Activated naive CD4-positive, alpha-beta T cell treated with anti-CD3 and anti-CD28 coated beads for 36 hours (primary cell): ENCODE measurements at regions of chr17 and their contacts with region 1.

Region 1: DNA sequence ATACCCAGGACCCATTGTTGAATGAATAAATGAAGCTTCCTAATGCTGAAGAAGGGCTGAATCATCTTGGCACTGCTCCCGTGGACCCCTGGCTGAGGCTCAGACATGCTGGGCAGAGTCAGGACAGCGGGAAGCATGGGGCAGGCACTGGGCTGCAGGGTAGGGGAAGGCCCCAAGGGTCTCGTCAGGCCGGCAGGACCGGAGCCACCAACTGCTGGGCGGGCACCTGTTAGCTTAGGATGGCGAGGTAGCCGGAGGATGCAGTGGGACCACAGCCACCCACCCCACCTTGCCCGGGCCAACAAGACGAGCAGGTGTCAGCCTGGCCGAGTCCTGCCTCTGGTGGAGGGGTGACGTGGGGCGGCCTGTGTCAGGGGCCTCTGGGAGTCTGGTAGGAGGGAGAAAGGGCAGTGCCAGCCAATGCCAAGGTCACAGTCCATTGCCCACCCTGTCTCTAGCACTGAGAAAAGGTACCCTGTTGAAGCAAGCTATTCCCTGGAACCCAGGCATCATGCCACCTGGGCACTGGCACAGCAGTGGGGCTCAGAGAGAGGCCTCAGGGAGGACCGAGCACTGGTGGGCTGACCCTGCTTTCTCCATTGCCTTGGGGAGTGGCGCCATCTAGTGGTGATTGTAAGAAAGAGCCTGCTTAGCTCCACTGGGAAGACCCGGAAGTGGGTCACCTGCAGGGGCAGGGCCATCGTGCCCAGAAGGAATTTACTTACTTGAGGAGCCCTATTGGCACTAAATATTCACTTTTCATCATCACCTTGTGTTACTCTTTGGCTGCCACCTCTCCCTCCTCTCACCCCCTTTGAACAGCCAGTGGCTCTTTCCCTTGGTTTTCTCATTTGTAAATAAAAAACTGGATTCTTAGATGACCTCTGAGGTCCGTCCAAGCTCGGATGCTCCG is 3.0 kb upstream of the DLX3 start:
- DNase-seq: peak; percentile 92
- H3K4me3 Mint-ChIP-seq: no peak overlapping the region
- H3K27ac Mint-ChIP-seq: no peak overlapping the region
- H3K4me1 Mint-ChIP-seq: peaks cover 25% of the 10 kb centered on the region
- H3K27me3 Mint-ChIP-seq: peaks cover 61% of the 10 kb centered on the region

Region 2: GRCh38 chr17:49694847-49695683 is 303.0 kb before region 1 on chr17:
- CTCF ChIA-PET with region 1: interaction called, 3 read pairs
- intact Hi-C with region 1: loop called (anchors 1 kb)
- DNase-seq: peak; percentile 87
- H3K4me3 Mint-ChIP-seq: no peak overlapping the region
- H3K27ac Mint-ChIP-seq: peak overlapping the region; percentile 92
- H3K4me1 Mint-ChIP-seq: peaks cover 39% of the 10 kb centered on the region
- H3K27me3 Mint-ChIP-seq: no peaks in the 10 kb centered on the region

Region 3: GRCh38 chr17:49822829-49823228 is 175.2 kb before region 1 on chr17:
- CTCF ChIA-PET with region 1: no interaction called
- intact Hi-C with region 1: no loop called
- DNase-seq: no peak
- H3K4me3 Mint-ChIP-seq: no peak overlapping the region
- H3K27ac Mint-ChIP-seq: no peak overlapping the region
- H3K4me1 Mint-ChIP-seq: peaks cover 31% of the 10 kb centered on the region
- H3K27me3 Mint-ChIP-seq: no peaks in the 10 kb centered on the region

Region 4: GRCh38 chr17:49880291-49881053 is 117.6 kb before region 1 on chr17:
- CTCF ChIA-PET with region 1: interaction called, 77 read pairs
- intact Hi-C with region 1: loop called (anchors 1 kb)
- DNase-seq: peak; percentile 81
- H3K4me3 Mint-ChIP-seq: no peak overlapping the region
- H3K27ac Mint-ChIP-seq: no peak overlapping the region
- H3K4me1 Mint-ChIP-seq: peaks cover 7% of the 10 kb centered on the region
- H3K27me3 Mint-ChIP-seq: peaks cover 32% of the 10 kb centered on the region

Region 5: GRCh38 chr17:49939318-49939717 is 58.7 kb before region 1 on chr17:
- CTCF ChIA-PET with region 1: interaction called, 26 read pairs
- intact Hi-C with region 1: no loop called
- DNase-seq: no peak
- H3K4me3 Mint-ChIP-seq: no peak overlapping the region
- H3K27ac Mint-ChIP-seq: no peak overlapping the region
- H3K4me1 Mint-ChIP-seq: no peaks in the 10 kb centered on the region
- H3K27me3 Mint-ChIP-seq: peaks cover 4% of the 10 kb centered on the region

Region 6: DNA sequence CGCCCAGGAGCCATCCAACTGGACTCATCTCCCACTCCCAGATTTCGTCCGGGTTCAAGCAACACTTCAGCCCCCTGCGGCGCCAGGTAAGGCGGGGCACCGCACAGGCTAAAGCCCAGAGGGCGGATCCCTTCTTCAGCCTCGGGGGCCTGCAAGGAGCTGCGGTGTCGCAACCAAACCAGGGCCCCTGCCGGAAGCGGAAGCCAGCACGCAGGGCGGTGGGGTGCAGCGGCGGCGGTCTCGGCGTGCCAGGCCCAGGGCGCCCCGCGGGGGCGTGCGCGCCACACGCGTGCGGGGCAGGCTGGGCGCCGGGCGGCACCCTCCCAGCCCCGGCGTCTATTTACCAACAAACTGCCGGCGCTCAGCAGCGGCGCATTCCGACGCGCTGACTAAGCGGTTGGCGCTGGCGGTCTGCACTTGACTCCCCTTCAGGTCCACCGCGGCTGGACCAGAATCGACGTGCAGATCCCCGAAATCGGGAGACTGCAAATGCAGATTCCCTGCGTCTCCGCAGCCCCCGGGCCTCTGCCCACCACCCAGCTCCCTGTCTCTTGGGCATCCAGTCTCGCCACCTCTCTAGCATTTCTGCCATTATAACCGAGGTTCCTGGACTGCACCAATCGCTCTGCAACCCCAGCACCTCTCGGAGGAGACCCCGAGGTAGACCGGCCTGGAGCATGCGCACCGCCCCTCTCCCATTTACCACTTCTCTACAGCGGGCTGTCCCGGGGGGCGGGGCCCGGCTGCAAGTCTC is 29.5 kb before region 1 on chr17:
- CTCF ChIA-PET with region 1: interaction called, 51 read pairs
- intact Hi-C with region 1: loop called (anchors 2 kb)
- DNase-seq: peak; percentile 82
- H3K4me3 Mint-ChIP-seq: peak overlapping the region; percentile 90
- H3K27ac Mint-ChIP-seq: peak overlapping the region; percentile 50
- H3K4me1 Mint-ChIP-seq: peaks cover 45% of the 10 kb centered on the region
- H3K27me3 Mint-ChIP-seq: peaks cover 78% of the 10 kb centered on the region

Region 7: DNA sequence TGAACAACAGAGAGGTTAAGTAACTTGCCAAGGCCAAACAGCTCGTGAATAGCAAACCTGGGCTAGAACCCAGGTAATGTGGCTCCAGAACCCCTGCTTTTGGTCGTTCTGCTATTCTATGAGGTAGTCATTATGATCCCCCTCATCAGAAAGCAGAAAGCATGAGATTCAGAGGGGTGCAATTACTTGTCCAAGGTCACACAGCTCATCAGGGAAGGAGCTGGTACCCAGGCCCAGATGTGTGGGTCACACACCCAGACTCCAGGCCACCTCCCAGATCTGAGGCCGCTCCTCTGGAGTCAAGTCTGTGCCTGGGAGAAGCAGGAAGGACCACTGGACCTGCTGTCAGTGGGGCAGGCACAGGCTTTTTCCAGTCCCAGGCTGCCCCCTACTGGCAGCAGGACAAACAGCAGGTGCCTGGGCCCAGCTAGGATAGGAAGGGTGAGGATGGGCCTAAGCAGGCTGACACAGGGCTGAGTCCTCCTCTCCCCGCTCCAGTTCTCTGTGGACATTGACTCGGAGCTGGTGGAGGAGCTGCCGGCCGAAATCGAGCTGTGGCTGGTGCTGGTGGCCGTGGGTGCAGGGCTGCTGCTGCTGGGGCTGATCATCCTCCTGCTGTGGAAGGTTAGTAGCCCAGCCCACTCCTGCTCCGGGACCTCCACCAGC is 89.3 kb after region 1 on chr17:
- CTCF ChIA-PET with region 1: interaction called, 34 read pairs
- intact Hi-C with region 1: no loop called
- DNase-seq: peak; percentile 85
- H3K4me3 Mint-ChIP-seq: no peak overlapping the region
- H3K27ac Mint-ChIP-seq: no peak overlapping the region
- H3K4me1 Mint-ChIP-seq: no peaks in the 10 kb centered on the region
- H3K27me3 Mint-ChIP-seq: no peaks in the 10 kb centered on the region